ENCODE measurements at regions of chr3 and their contacts with region 1.

Region 1: DNA sequence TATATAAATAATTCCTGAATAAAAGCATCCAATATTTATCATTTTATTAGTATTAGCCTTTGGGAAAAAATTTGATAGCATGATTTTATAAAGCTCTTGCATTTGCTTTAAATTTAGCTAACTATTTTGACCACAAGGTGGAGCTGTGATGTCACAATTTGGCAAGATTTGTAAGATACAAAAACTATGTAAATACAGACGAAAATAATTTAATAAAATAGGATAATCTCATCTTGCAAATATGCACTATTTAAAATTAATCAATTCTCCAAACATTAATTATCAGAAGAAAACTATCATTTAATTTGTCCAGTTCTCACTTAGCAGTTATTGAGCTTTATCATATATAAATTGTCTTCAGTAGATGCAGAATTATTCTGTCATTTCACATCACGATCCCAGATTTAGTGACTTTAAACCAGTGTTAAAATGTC is 95.4 kb downstream of the PLOD2 start:
- H3K4me3 ChIP-seq: no peak overlapping the region
- H3K27ac ChIP-seq: no peak overlapping the region
- H3K4me1 ChIP-seq: no peaks in the 10 kb centered on the region
- CTCF ChIP-seq: no peak

Region 2: DNA sequence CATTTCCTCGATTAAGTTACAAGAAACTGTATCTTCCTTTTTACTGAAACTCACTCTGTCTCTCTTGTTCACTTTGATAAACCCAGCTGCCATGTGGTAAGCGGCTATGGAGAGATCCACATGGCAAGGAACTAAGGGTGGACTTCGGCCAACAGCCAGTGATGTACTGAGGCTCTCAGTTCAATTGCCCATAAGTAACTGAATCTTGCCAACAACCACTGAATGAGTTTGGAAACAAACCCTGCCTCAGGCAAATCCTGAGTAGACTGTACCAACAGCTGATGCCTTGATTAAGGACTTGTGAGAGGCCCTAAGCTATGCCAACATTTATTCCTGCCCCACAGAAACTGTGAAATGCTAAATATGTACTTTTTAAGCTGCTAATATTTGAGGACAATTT is 338.1 kb before region 1 on chr3:
- CTCF ChIA-PET with region 1: no interaction called
- POLR2A ChIA-PET with region 1: no interaction called
- H3K4me3 ChIP-seq: no peak overlapping the region
- H3K27ac ChIP-seq: no peak overlapping the region
- H3K4me1 ChIP-seq: no peaks in the 10 kb centered on the region
- CTCF ChIP-seq: no peak

Region 3: DNA sequence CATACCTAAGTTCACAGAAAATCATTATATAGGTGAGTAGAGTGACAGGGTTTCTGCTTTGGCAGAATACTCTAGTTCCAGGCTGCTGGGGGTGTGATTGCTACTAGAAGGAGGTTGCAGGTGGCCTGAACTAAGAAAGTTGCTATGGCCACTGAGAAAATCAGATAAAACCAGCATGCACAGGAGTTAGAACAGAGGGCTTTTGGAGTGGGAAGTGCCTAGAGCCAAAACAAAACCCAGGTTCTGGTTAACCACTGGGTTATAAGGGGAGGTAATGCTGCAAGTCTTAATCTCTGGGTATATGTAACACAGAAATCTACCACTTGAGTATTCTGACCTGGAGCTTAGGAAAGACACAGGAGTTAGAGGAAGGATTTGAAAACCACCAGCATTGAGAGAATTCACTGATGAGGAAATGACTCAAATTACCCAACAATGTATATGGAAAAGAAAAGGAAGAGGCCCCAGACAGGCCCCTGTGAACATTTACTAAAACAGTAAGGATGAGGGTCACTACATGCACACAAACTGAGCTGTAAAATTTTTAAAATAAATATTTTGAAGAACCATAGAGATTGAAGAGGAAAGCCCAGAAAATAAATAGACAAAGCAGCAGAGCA is 35.3 kb after region 1 on chr3:
- CTCF ChIA-PET with region 1: no interaction called
- POLR2A ChIA-PET with region 1: no interaction called
- H3K4me3 ChIP-seq: no peak overlapping the region
- H3K27ac ChIP-seq: no peak overlapping the region
- H3K4me1 ChIP-seq: no peaks in the 10 kb centered on the region
- CTCF ChIP-seq: no peak

Region 4: GRCh38 chr3:146177519-146177918 is 111.9 kb after region 1 on chr3:
- CTCF ChIA-PET with region 1: interaction called, 10 read pairs
- POLR2A ChIA-PET with region 1: no interaction called
- H3K4me3 ChIP-seq: no peak overlapping the region
- H3K27ac ChIP-seq: no peak overlapping the region
- H3K4me1 ChIP-seq: no peaks in the 10 kb centered on the region
- CTCF ChIP-seq: no peak

Region 5: GRCh38 chr3:146184616-146185015 is 119.0 kb after region 1 on chr3:
- CTCF ChIA-PET with region 1: interaction called, 86 read pairs
- POLR2A ChIA-PET with region 1: no interaction called
- H3K4me3 ChIP-seq: no peak overlapping the region
- H3K27ac ChIP-seq: no peak overlapping the region
- H3K4me1 ChIP-seq: no peaks in the 10 kb centered on the region
- CTCF ChIP-seq: no peak

Region 6: GRCh38 chr3:146646261-146646660 is 580.7 kb after region 1 on chr3:
- CTCF ChIA-PET with region 1: no interaction called
- POLR2A ChIA-PET with region 1: no interaction called
- H3K4me3 ChIP-seq: no peak overlapping the region
- H3K27ac ChIP-seq: no peak overlapping the region
- H3K4me1 ChIP-seq: no peaks in the 10 kb centered on the region
- CTCF ChIP-seq: no peak